ENCODE measurements at regions of chr19 and their contacts with region 1.

Region 1: DNA sequence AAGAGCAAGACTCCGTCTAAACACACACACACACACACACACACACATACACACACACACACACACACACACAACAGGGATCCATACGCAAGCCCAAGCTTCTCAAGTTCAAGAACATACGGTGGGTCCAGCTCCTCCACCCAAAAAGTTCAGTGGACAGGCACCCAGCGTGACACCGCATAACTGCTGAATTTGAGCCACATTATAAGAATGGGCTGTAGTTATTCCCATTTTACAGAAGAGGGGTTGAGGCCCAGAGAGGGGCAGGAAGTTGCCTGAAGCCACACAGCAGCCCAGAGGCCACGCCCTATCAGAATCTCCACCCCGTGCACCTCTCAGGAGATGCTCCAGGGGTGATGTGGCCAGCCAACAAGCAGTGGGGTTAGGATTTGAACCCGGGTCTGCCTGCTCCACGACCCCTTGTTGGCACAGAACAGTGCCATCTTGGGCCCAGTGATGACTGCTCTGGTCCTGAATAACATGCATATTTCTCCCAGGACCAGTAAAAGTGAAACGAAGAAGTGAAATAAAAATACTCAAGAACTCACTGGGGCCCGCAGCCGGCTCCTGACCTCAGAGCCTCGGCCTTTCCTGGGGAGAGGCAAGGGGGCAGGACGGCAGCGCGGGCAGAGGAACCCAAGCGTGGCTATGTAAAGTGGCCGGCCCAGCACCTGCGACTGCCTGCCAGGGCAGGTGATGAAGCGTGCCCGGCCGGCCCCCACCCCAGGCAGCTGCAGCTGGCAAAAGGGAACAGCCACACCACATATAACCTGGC is 61.9 kb downstream of the AP1M1 start:
- DNase-seq: peak; percentile 91
- H3K4me3 ChIP-seq: no peak overlapping the region
- H3K27ac ChIP-seq: peak overlapping the region; percentile 73 to 95 (median 81)
- H3K4me1 ChIP-seq: peaks cover 14 to 24% of the 10 kb centered on the region in 2 donors
- H3K27me3 ChIP-seq: no peaks in the 10 kb centered on the region
- CTCF ChIP-seq: no peak
- POLR2A ChIP-seq: no peak

Region 2: DNA sequence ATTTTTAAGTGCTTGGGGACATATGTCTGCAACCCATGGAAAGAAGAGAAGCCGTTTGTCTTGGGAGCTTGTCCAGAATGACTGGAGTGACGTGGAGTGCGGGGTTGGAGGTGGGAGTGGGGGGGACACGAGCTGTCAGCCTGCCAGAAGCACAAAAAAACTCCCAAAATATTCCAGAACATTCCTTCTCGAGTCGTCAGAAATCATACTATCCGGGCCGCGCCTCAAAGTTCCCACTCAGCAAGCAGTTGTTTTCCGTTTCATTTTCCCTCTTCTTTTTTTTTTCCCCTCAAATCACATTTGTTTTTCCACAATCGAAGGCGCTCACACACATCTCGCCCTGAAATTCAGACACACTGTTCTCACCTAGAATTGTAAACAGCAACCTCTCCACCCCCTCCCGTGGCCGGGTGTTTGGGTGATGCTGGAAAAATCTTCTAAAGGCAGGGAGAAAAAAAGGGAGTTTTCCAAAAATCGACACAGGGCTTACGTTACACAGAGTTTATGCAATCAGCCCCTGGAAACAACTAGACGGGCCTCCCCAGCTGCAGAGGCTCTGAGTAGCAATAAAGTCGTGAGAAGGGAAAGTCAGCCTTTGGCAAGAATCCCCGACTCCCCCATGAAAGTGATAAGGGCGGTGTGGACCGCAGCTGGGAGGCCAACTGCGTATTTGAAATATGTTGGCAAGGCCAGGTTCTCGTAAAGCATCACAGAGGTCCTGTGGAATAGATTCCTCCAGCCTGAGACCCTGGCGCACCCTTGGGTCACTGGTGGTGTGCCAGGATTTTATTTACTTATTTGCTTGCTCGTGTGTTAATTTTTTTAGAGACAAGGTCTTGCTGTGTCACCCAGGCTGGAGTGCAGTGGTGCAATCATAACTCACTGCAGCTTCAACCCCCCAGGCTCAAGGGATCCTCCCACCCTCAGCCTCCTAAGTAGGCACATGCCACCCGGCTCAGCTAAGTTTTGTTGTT is 33.8 kb after region 1 on chr19:
- intact Hi-C with region 1: no loop called
- DNase-seq: peak; percentile 16 to 21
- H3K4me3 ChIP-seq: no peak overlapping the region
- H3K27ac ChIP-seq: peak overlapping the region; percentile 71 to 83 (median 77)
- H3K4me1 ChIP-seq: peaks cover 7 to 10% of the 10 kb centered on the region in 2 donors
- H3K27me3 ChIP-seq: no peaks in the 10 kb centered on the region
- CTCF ChIP-seq: no peak
- POLR2A ChIP-seq: no peak

Region 3: GRCh38 chr19:16315825-16316505 is 56.4 kb after region 1 on chr19:
- intact Hi-C with region 1: loop called (anchors 10 kb)
- DNase-seq: no peak
- H3K4me3 ChIP-seq: no peak overlapping the region
- H3K27ac ChIP-seq: peak overlapping the region in 2 of 3 donors; percentile 53 to 56
- H3K4me1 ChIP-seq: peaks cover 7 to 21% of the 10 kb centered on the region in 2 donors
- H3K27me3 ChIP-seq: no peaks in the 10 kb centered on the region
- CTCF ChIP-seq: no peak
- POLR2A ChIP-seq: no peak

Measured in thyroid gland (tissue), 4 donors.